ENCODE measurements at regions of chr12 and their contacts with region 1.

Region 1: GRCh38 chr12:116599285-116600136 is 40.3 kb downstream of the MAP1LC3B2 start:
- DNase-seq: peak in 1 of 2 experiments; percentile 92
- H3K4me3 ChIP-seq: peak overlapping the region in 2 of 4 experiments; percentile 10 to 40; a peak in 1 of 8 replicates
- H3K27ac ChIP-seq: no peak overlapping the region
- H3K4me1 ChIP-seq: peaks cover 0 to 5% (median 4%) of the 10 kb centered on the region in 4 experiments; a peak in 5 of 7 replicates
- H3K27me3 ChIP-seq: no peaks in the 10 kb centered on the region
- CTCF ChIP-seq: peak; percentile 59 to 83 (median 61)
- EP300 ChIP-seq: no peak
- POLR2A ChIP-seq: no peak
- RAD21 ChIP-seq: peak; percentile 74 to 75

Region 2: GRCh38 chr12:115983226-115983798 is 616.2 kb before region 1 on chr12:
- CTCF ChIA-PET with region 1: interaction called, 10 read pairs
- POLR2A ChIA-PET with region 1: no interaction called
- DNase-seq: peak; percentile 25 to 75
- H3K4me3 ChIP-seq: no peak overlapping the region
- H3K27ac ChIP-seq: no peak overlapping the region
- H3K4me1 ChIP-seq: peaks cover 2 to 7% (median 6%) of the 10 kb centered on the region in 4 experiments; a peak in 4 of 7 replicates
- H3K27me3 ChIP-seq: no peaks in the 10 kb centered on the region
- CTCF ChIP-seq: peak; percentile 76 to 90 (median 81)
- EP300 ChIP-seq: no peak
- POLR2A ChIP-seq: no peak
- RAD21 ChIP-seq: peak; percentile 86 to 87

Region 3: DNA sequence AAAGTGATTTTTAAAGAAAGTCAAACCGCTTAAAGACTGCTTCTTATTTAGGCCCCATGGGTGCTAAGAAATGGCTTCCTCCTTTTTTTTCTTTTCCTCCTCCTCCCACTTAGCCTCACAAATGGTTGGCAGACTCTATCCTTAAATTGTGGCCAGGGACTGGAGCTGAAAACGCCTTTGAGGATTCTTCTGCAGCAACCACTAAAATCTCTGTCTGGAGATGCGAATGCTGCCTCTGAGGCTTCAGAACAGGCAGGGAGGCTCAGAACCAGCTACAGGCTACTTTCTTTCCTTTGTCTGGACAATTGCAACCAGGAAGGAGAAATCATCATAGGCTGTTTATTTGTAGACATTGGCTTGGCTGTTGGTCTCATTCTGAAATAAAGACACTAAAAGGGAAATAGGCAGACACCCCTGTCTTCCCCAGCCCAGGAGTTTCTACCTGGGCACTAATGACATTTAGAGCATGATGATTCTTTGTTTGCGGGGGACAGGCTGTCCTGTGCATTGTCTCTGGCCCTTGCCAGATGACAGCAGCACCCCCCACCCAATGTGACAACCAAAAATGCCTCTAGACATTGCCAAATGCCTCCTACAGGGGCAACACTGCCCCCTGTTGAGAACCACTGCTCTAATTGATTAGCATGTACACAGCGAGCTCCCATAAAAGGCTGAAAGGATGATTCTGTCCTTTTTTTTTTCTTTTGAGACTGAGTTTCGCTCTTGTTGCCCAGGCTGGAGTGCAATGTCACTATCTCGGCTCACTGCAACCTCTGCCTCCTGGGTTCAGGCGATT is 10.0 kb after region 1 on chr12:
- CTCF ChIA-PET with region 1: interaction called, 34 read pairs
- POLR2A ChIA-PET with region 1: no interaction called
- DNase-seq: no peak
- H3K4me3 ChIP-seq: no peak overlapping the region
- H3K27ac ChIP-seq: no peak overlapping the region
- H3K4me1 ChIP-seq: peaks cover 0 to 11% (median 8%) of the 10 kb centered on the region in 4 experiments; a peak in 6 of 7 replicates
- H3K27me3 ChIP-seq: no peaks in the 10 kb centered on the region
- CTCF ChIP-seq: peak in 1 of 3 experiments; percentile 40; a peak in 3 of 4 replicates
- EP300 ChIP-seq: no peak
- POLR2A ChIP-seq: no peak
- RAD21 ChIP-seq: peak; percentile 52 to 64

Region 4: GRCh38 chr12:116650062-116650461 is 50.6 kb after region 1 on chr12:
- CTCF ChIA-PET with region 1: no interaction called
- POLR2A ChIA-PET with region 1: no interaction called
- DNase-seq: no peak
- H3K4me3 ChIP-seq: no peak overlapping the region
- H3K27ac ChIP-seq: no peak overlapping the region
- H3K4me1 ChIP-seq: peaks cover 0 to 8% (median 6%) of the 10 kb centered on the region in 4 experiments; a peak in 3 of 7 replicates
- H3K27me3 ChIP-seq: no peaks in the 10 kb centered on the region
- CTCF ChIP-seq: no peak
- EP300 ChIP-seq: no peak
- POLR2A ChIP-seq: no peak
- RAD21 ChIP-seq: no peak

Region 5: GRCh38 chr12:116687888-116688287 is 88.4 kb after region 1 on chr12:
- CTCF ChIA-PET with region 1: interaction called, 14 read pairs
- POLR2A ChIA-PET with region 1: no interaction called
- DNase-seq: peak; percentile 76 to 92
- H3K4me3 ChIP-seq: no peak overlapping the region
- H3K27ac ChIP-seq: no peak overlapping the region
- H3K4me1 ChIP-seq: peaks cover 0 to 2% (median 0%) of the 10 kb centered on the region in 4 experiments; a peak in 2 of 7 replicates
- H3K27me3 ChIP-seq: 0 out of 7 replicates have a peak, but pooled peaks cover 0 to 3% (median 0%) of the 10 kb centered on the region in 4 experiments
- CTCF ChIP-seq: peak; percentile 94 to 100 (median 99)
- EP300 ChIP-seq: peak in 1 of 2 experiments; percentile 41; a peak in 1 of 3 replicates
- POLR2A ChIP-seq: no peak
- RAD21 ChIP-seq: peak; percentile 82 to 90

Measured in H1 (cell line).